ENCODE measurements at regions of chr12 and their contacts with region 1.

Region 1: DNA sequence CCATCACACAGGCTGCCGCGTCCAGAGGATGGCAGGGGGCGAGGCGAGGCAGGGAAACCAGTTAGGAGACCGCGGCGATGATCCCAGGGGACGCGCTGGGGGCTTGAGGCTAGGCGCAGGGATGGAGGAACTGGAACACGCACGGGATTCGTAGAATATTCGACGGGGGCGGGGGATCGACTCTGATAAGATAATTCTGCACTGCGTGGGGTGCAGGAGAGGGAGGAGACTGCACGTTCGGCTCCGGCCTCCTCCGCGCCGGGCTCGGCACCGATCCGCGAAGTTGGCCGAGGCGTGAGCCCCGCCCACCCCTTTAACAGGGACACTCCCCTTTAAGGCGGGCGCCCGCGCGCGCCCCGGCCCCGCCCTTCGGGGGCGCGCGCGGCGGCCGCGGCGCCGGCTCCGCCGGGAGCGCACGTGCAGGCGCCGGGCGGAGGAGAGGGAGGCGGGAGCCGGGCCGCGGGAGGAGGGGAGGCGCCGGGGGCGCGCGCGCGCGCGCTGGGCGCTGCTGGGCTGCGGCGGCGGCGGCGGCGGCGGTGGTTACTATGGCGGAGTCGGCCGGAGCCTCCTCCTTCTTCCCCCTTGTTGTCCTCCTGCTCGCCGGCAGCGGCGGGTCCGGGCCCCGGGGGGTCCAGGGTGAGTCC is at the start of gene ACVR1B:
- DNase-seq: peak; percentile 84 to 95 (median 91)
- ATAC-seq: peak; percentile 95
- H3K4me3 ChIP-seq: peak within 1 kb of the TSS; percentile 76 to 93
- H3K4me3 Mint-ChIP-seq: peak within 1 kb of the TSS; percentile 98
- H3K27ac ChIP-seq: peak within 1 kb of the TSS; percentile 44 to 69
- H3K27ac Mint-ChIP-seq: peak within 1 kb of the TSS; percentile 91
- H3K4me1 ChIP-seq: peaks cover 38% of the 10 kb centered on the region
- H3K4me1 Mint-ChIP-seq: peaks cover 42% of the 10 kb centered on the region
- H3K27me3 ChIP-seq: no peaks in the 10 kb centered on the region
- H3K27me3 Mint-ChIP-seq: no peaks in the 10 kb centered on the region
- CTCF ChIP-seq: no peak
- total RNA-seq, gene ACVR1B: 12.0 to 13.7 TPM

Region 2: GRCh38 chr12:51077971-51078370 is 873.4 kb before region 1 on chr12:
- CTCF ChIA-PET with region 1: no interaction called
- POLR2A ChIA-PET with region 1: no interaction called
- intact Hi-C with region 1: no loop called
- DNase-seq: no peak
- ATAC-seq: no peak
- H3K4me3 ChIP-seq: no peak overlapping the region
- H3K4me3 Mint-ChIP-seq: no peak overlapping the region
- H3K27ac ChIP-seq: no peak overlapping the region
- H3K27ac Mint-ChIP-seq: no peak overlapping the region
- H3K4me1 ChIP-seq: peaks cover 12% of the 10 kb centered on the region
- H3K4me1 Mint-ChIP-seq: peaks cover 47% of the 10 kb centered on the region
- H3K27me3 ChIP-seq: no peaks in the 10 kb centered on the region
- H3K27me3 Mint-ChIP-seq: no peaks in the 10 kb centered on the region
- CTCF ChIP-seq: no peak

Region 3: GRCh38 chr12:51579321-51579850 is 371.9 kb before region 1 on chr12:
- CTCF ChIA-PET with region 1: no interaction called
- POLR2A ChIA-PET with region 1: no interaction called
- intact Hi-C with region 1: no loop called
- DNase-seq: no peak
- ATAC-seq: no peak
- H3K4me3 ChIP-seq: no peak overlapping the region
- H3K4me3 Mint-ChIP-seq: no peak overlapping the region
- H3K27ac ChIP-seq: no peak overlapping the region
- H3K27ac Mint-ChIP-seq: no peak overlapping the region
- H3K4me1 ChIP-seq: no peaks in the 10 kb centered on the region
- H3K4me1 Mint-ChIP-seq: no peaks in the 10 kb centered on the region
- H3K27me3 ChIP-seq: peaks cover 0 to 2% of the 10 kb centered on the region in 2 experiments
- H3K27me3 Mint-ChIP-seq: peaks cover 47% of the 10 kb centered on the region
- CTCF ChIP-seq: no peak

Region 4: GRCh38 chr12:51911788-51912711 is 39.3 kb before region 1 on chr12:
- CTCF ChIA-PET with region 1: no interaction called
- POLR2A ChIA-PET with region 1: no interaction called
- intact Hi-C with region 1: no loop called
- DNase-seq: no peak
- ATAC-seq: no peak
- H3K4me3 ChIP-seq: no peak overlapping the region
- H3K4me3 Mint-ChIP-seq: no peak overlapping the region
- H3K27ac ChIP-seq: no peak overlapping the region
- H3K27ac Mint-ChIP-seq: no peak overlapping the region
- H3K4me1 ChIP-seq: no peaks in the 10 kb centered on the region
- H3K4me1 Mint-ChIP-seq: peaks cover 5% of the 10 kb centered on the region
- H3K27me3 ChIP-seq: peaks cover 2 to 10% of the 10 kb centered on the region in 2 experiments
- H3K27me3 Mint-ChIP-seq: peaks cover 22% of the 10 kb centered on the region
- CTCF ChIP-seq: no peak

Region 5: DNA sequence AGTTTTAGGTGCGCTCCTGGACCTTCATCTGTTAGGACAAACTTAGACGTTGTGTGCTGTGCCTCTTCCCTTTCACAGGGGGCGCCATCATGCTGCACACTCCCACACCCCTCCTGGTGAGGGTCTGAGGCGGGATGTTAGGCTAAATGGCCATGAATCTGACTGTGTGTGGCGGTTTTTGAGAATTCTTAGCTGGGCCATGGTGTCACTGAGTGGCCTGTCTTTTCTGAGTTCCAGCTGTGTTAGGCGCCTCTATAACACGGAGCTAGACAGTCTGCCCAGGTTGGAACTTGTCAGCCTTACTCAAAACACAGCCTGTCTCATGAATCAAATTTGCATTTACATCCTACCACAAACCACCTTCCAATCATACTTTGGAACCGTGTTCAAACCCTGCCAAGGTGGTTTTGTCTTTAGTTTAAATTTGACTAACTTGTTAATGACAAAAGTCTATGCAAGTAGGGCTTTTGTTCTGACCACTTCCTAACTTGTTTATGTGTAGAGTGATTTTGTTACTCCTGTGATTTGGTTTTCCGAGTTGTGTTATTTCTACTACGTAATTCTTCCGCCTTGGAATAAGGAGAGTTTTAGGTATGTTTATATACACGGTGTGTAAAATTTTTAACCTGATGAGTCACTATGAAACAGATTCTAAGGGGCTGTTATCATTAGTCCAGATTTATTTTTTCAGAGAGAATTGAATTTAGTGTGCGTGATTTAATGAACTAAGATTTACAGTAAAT is 19.8 kb after region 1 on chr12:
- CTCF ChIA-PET with region 1: interaction called, 7 read pairs
- POLR2A ChIA-PET with region 1: interaction called, 3 read pairs
- intact Hi-C with region 1: loop called (anchors 2 kb)
- DNase-seq: peak in 7 of 9 experiments; percentile 13 to 75 (median 44)
- ATAC-seq: peak; percentile 72
- H3K4me3 ChIP-seq: no peak overlapping the region
- H3K4me3 Mint-ChIP-seq: peak overlapping the region; percentile 52
- H3K27ac ChIP-seq: peak overlapping the region in 1 of 2 experiments; percentile 6
- H3K27ac Mint-ChIP-seq: peak overlapping the region; percentile 72
- H3K4me1 ChIP-seq: peaks cover 61% of the 10 kb centered on the region
- H3K4me1 Mint-ChIP-seq: peaks cover 62% of the 10 kb centered on the region
- H3K27me3 ChIP-seq: no peaks in the 10 kb centered on the region
- H3K27me3 Mint-ChIP-seq: no peaks in the 10 kb centered on the region
- CTCF ChIP-seq: peak; percentile 54

Region 6: DNA sequence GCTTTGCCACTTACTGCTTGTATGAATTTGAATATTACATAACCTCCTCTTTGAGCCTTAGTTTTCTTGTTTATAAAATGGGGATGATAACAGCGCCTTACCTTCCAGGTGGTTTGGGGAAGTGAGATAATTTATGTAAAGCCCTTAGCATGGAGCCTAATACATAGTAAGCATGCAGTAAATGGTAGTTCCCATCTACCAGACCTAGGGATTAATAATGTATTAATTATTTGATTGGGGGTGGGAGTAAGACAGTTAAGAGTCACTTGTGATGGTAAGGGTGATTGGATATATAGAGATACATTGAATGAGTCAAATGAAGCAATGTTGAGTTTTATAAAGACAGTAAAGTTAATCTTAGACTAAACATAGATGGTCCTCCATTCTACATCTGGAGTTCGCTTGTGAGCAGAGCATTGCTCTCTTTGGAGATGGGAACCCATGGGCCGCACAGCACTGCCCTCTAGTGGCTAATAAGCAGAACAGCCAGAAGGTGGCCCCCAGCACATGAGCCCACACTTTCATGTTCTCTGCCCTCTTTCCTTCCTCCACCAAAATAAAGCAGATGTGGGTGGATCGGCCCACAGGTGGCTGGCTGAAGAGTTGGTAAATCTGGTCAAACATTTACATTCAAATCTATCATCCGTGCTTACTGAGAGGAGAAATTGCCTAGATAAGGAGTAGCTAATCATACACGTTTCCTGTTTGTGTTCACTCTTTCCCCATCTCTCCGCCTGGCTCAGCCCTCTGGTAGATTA is 28.9 kb after region 1 on chr12:
- CTCF ChIA-PET with region 1: interaction called, 4 read pairs
- POLR2A ChIA-PET with region 1: no interaction called
- intact Hi-C with region 1: loop called (anchors 2 kb)
- DNase-seq: peak; percentile 43 to 83 (median 68)
- ATAC-seq: peak; percentile 100
- H3K4me3 ChIP-seq: no peak overlapping the region
- H3K4me3 Mint-ChIP-seq: no peak overlapping the region
- H3K27ac ChIP-seq: no peak overlapping the region
- H3K27ac Mint-ChIP-seq: no peak overlapping the region
- H3K4me1 ChIP-seq: peaks cover 7% of the 10 kb centered on the region
- H3K4me1 Mint-ChIP-seq: peaks cover 26% of the 10 kb centered on the region
- H3K27me3 ChIP-seq: no peaks in the 10 kb centered on the region
- H3K27me3 Mint-ChIP-seq: no peaks in the 10 kb centered on the region
- CTCF ChIP-seq: peak; percentile 95

Region 7: GRCh38 chr12:52004042-52004648 is 52.8 kb after region 1 on chr12:
- CTCF ChIA-PET with region 1: interaction called, 4 read pairs
- POLR2A ChIA-PET with region 1: no interaction called
- intact Hi-C with region 1: loop called in 1 of 2 experiments (anchors 2 kb)
- DNase-seq: peak in 2 of 9 experiments; percentile 33 to 48
- ATAC-seq: no peak
- H3K4me3 ChIP-seq: no peak overlapping the region
- H3K4me3 Mint-ChIP-seq: no peak overlapping the region
- H3K27ac ChIP-seq: no peak overlapping the region
- H3K27ac Mint-ChIP-seq: no peak overlapping the region
- H3K4me1 ChIP-seq: peaks cover 20% of the 10 kb centered on the region
- H3K4me1 Mint-ChIP-seq: peaks cover 18% of the 10 kb centered on the region
- H3K27me3 ChIP-seq: peaks cover 0 to 4% of the 10 kb centered on the region in 2 experiments
- H3K27me3 Mint-ChIP-seq: no peaks in the 10 kb centered on the region
- CTCF ChIP-seq: peak; percentile 34

Region 8: GRCh38 chr12:52258335-52258901 is 307.1 kb after region 1 on chr12:
- CTCF ChIA-PET with region 1: no interaction called
- POLR2A ChIA-PET with region 1: no interaction called
- intact Hi-C with region 1: no loop called
- DNase-seq: no peak
- ATAC-seq: no peak
- H3K4me3 ChIP-seq: no peak overlapping the region
- H3K4me3 Mint-ChIP-seq: no peak overlapping the region
- H3K27ac ChIP-seq: no peak overlapping the region
- H3K27ac Mint-ChIP-seq: no peak overlapping the region
- H3K4me1 ChIP-seq: peaks cover 4% of the 10 kb centered on the region
- H3K4me1 Mint-ChIP-seq: peaks cover 6% of the 10 kb centered on the region
- H3K27me3 ChIP-seq: no peaks in the 10 kb centered on the region
- H3K27me3 Mint-ChIP-seq: peaks cover 43% of the 10 kb centered on the region
- CTCF ChIP-seq: no peak